ENCODE measurements at regions of chr4 and their contacts with region 1.

Region 1: DNA sequence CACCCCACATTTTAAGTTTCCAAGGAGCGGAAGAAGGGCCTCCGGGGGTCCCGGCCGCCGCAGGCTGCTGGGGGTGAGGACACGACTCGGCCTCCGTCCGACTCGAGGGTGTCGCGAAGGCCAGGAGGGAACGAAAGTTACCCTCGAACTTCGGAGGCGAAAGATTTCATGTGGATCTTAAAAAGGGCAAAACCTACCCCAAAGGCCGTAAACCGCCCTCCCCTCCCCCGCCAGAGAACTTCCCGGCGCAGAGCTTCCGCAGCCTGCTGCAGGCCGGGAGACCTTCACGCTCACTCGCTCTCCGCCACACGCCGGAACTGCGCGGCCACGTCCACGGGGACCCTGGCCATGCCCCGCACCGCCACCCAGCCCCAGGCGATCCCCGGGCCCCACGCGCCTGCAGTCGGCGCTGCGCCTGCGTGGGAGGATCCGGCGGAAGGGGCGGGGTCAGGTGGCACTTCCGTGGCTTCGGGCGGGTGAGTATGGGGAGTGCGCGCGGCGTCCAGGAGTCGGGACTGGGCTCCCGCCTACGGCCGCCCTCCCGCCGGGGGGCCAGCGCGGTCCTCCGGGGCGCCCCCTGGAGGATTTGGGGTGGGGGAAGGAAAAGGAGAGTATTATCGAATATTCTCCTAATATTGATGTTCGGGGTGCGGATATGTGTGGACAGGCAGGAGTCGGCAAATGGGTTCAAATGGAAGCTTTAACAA is at the start of gene MMAA:
- DNase-seq: peak; percentile 82 to 97
- H3K4me3 ChIP-seq: peak within 1 kb of the TSS; percentile 78 to 89
- H3K27ac ChIP-seq: peak within 1 kb of the TSS; percentile 95 to 98
- H3K4me1 ChIP-seq: peaks cover 0 to 5% of the 10 kb centered on the region in 2 donors
- H3K27me3 ChIP-seq: no peaks in the 10 kb centered on the region
- CTCF ChIP-seq: peak; percentile 44 to 67 (median 67)
- total RNA-seq, gene MMAA: 3.9 TPM

Region 2: DNA sequence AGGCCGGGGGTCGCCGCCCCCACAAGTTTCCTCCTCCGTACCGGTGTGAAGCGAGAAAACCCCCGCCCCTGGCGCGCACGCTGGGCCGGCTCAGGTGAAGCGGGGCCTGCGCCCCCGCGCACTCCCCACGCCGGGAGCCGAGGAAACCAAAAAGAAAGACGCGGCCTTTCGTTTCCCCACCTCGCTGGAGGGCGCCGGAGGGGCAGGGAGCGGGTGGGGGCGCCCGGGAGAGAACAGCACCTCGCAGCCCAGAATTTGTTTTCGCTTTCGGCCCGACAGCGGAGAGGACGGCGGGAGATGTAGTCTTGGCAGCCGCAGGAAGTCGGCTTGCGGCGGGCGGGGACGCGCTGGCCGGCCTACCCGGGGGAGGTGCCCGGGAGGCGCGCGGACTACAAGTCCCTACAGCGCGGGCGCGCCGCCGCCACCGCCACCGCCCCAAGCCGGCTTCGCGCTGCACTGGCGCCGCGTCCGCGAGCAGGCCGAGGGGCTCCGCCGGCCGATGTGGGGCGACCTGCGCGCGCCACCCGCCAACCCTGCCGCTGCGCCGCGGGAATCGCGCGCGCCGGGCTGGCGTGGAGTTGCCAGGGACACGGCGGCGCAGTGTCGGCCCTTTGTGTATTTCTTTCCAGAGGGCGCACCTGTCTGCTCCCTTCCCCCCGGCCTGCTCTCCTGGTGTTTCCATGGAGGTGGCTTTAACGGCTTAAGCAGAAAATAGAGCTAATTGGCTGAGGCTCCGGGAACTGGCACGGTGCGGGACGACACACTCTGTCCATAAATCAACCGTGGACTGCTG is 438.6 kb before region 1 on chr4 and contains the start of gene OTUD4:
- intact Hi-C with region 1: loop called (anchors 1 kb)
- DNase-seq: peak; percentile 84 to 98
- H3K4me3 ChIP-seq: peak within 1 kb of the TSS; percentile 91 to 93
- H3K27ac ChIP-seq: peak within 1 kb of the TSS; percentile 94 to 99
- H3K4me1 ChIP-seq: peaks cover 0 to 14% of the 10 kb centered on the region in 2 donors
- H3K27me3 ChIP-seq: no peaks in the 10 kb centered on the region
- CTCF ChIP-seq: peak in 2 of 3 experiments; percentile 13 to 23
- total RNA-seq, gene OTUD4: 81.4 TPM

Region 3: DNA sequence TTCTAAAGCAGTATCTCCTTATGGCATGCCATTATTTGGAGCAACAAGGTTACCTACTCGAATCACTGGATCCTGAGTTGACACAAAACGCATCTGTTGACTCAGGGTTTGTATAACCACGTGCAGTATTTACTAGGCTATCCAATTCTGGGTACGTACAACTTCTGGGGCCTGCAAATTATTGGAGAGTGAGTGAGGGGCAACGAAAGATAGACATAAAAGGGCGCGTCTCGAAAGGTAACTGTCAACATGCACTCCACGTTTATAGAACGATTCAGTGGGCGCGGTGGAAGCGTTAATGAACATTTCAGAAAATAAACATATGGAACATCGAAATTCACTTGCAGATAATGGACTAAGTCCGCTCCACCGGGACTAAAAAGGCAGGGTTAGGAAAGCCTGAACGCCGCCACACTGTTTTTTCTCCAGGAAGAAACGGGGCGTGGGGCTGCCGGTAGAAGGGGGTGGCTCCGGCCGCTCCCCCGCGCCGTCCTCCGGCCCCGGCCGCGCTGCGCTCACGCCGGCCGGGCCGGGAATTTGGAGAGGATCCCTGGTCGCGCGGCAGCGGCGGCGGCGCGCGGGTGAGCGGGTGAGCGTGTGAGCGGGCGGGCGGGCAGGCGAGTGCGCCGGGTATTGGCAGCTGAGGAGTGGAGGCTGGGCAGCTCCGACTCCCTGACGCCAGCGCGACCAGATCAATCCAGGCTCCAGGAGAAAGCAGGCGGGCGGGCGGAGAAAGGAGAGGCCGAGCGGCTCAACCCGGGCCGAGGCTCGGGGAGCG is 137.7 kb before region 1 on chr4 and contains the start of gene SMAD1:
- intact Hi-C with region 1: loop called (anchors 5 kb)
- DNase-seq: peak in 1 of 2 donors; percentile 89
- H3K4me3 ChIP-seq: peak within 1 kb of the TSS; percentile 96 to 99
- H3K27ac ChIP-seq: peak within 1 kb of the TSS; percentile 97
- H3K4me1 ChIP-seq: no peaks in the 10 kb centered on the region
- H3K27me3 ChIP-seq: no peaks in the 10 kb centered on the region
- CTCF ChIP-seq: no peak
- total RNA-seq, gene SMAD1: 20.1 TPM

Region 4: GRCh38 chr4:145743641-145744040 is 124.6 kb after region 1 on chr4:
- intact Hi-C with region 1: no loop called
- DNase-seq: no peak
- H3K4me3 ChIP-seq: no peak overlapping the region
- H3K27ac ChIP-seq: no peak overlapping the region
- H3K4me1 ChIP-seq: no peaks in the 10 kb centered on the region
- H3K27me3 ChIP-seq: no peaks in the 10 kb centered on the region
- CTCF ChIP-seq: no peak

Region 5: DNA sequence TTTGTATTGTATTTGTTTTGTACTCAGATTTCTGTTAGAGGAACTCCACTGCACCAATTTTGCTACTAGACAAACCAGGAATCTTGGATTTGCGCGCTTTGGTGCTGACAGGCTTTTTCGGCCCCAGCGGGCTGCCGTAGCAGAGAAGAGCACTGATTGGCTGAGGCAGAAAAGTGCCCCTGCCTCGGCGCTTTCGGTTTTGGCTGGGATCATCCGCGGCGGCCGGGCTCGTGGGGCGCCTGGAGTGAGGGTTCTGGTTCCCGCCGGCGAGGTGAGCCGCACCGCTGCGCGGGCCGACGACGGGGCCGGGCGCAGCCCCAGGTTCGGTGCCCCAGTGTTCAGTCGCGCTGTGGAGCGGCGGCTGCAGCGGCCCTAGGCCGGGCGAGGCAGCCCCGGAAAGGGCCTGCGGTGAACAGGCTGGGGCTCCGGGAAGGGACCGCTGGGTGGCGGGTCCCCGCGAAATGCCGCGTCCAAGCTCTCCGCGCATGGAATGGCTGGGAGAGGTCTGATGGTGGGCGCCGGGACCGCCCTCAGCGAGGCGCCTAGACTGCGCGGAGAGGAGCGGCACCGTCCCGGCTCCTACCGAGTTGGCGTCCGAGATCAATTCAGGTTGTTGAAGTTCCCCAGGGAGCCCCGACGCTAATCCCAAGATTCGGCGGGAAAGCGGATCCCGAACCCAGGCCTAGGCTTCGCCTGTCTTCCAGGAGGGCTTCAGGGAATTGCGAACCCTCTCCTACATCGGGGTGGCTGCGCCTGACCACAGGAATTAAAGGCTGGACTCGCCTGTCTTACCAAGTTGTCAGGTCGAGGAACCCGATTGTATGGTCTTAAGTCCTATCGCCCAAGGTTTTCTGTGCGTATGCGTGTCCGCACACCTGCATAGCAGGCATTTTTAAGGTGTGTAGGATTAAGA is 556.7 kb after region 1 on chr4 and contains the start of gene LSM6:
- intact Hi-C with region 1: loop called (anchors 5 kb)
- DNase-seq: peak; percentile 39 to 91
- H3K4me3 ChIP-seq: peak within 1 kb of the TSS; percentile 95 to 99
- H3K27ac ChIP-seq: peak within 1 kb of the TSS; percentile 95
- H3K4me1 ChIP-seq: peaks cover 2 to 17% of the 10 kb centered on the region in 2 donors
- H3K27me3 ChIP-seq: no peaks in the 10 kb centered on the region
- CTCF ChIP-seq: peak in 1 of 3 experiments; percentile 21
- total RNA-seq, gene LSM6: 10.7 TPM

Measured in ascending aorta (tissue), 2 donors.